K562 (cell line): ENCODE measurements at regions of chr15 and their contacts with region 1.

Region 1: GRCh38 chr15:85108136-85108535 is 126.5 kb downstream of the PDE8A start:
- DNase-seq: no peak
- ATAC-seq: no peak
- H3K4me3 ChIP-seq: no peak overlapping the region
- H3K27ac ChIP-seq: no peak overlapping the region
- H3K4me1 ChIP-seq: no peaks in the 10 kb centered on the region
- H3K27me3 ChIP-seq: no peaks in the 10 kb centered on the region
- CTCF ChIP-seq: no peak
- EP300 ChIP-seq: no peak
- POLR2A ChIP-seq: no peak
- RAD21 ChIP-seq: no peak

Region 2: DNA sequence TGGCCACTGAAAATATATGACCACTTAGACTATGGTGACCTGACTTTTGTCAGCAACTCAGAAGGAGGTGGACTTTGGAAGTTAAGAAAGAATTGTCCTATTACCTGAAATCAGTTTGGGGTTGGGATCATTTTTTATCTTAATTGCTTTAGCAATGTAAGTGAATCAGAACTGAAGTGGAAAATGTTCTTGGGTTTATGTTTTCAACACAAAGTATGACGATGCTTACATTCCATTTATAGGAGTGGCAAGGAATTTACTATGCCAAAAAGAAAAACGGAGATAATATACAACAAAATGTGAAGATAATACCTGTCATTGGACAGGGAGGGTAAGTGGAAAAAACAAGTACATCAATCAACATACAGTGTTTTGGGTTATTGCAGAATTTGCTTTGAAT is 10.4 kb before region 1 on chr15:
- CTCF ChIA-PET with region 1: no interaction called
- POLR2A ChIA-PET with region 1: interaction called, 11 read pairs
- in situ Hi-C with region 1: no loop called
- intact Hi-C with region 1: no loop called
- DNase-seq: no peak
- ATAC-seq: no peak; the same call in 2 of the 3 replicates
- H3K4me3 ChIP-seq: no peak overlapping the region
- H3K27ac ChIP-seq: no peak overlapping the region; the same call in 2 of the 3 replicates
- H3K4me1 ChIP-seq: peaks cover 3 to 9% of the 10 kb centered on the region in 2 experiments; a peak in 3 of 5 replicates
- H3K27me3 ChIP-seq: no peaks in the 10 kb centered on the region
- CTCF ChIP-seq: no peak
- EP300 ChIP-seq: no peak
- POLR2A ChIP-seq: no peak
- RAD21 ChIP-seq: no peak